Prostate gland (tissue), 2 donors: ENCODE measurements at regions of chr3 and their contacts with region 1.

Region 1: DNA sequence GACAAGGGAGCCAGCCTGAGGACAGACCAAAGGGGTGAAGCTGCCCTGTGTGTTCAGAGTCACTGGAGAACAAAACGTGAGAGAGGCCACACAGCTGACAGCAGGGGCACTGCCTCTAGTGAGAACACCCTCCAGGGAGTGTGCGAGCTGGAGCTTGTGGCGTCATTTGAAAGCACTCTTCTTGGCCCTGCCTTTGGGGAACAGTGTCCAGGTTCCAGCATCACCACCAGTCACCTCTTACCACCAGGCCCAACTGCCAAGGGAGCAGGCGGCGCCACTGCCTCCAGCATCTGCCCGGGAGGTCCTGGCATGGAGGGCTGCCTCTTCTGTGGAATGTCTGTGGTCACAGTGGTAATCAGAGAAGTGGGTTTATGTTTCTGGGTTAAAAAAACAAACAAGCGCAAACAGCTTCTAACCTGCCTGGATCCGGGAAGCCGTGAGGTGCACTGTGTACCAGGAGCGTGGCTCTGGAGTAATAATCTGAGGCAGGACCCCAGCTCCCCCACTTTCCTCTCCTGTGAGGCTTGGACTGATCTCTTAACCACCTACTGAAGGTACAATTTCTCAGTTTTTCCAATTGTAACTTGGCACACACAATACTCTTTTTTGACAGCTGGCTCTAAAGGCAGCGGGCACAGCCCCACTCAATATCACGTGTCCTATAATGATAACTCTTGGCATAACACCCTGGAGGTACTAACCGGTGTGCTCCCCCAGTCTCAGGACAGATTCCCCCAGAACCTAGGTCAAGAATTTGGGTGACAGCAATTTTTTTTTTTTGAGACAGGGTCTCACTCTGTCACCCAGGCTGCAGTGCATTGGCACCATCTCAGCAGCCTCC is 32.2 kb upstream of the CDCP1 start:
- DNase-seq: peak; percentile 56
- H3K4me3 ChIP-seq: no peak overlapping the region
- H3K27ac ChIP-seq: peak overlapping the region; percentile 28 to 51
- H3K4me1 ChIP-seq: peaks cover 8% of the 10 kb centered on the region
- H3K27me3 ChIP-seq: no peaks in the 10 kb centered on the region
- CTCF ChIP-seq: no peak
- POLR2A ChIP-seq: no peak

Region 2: DNA sequence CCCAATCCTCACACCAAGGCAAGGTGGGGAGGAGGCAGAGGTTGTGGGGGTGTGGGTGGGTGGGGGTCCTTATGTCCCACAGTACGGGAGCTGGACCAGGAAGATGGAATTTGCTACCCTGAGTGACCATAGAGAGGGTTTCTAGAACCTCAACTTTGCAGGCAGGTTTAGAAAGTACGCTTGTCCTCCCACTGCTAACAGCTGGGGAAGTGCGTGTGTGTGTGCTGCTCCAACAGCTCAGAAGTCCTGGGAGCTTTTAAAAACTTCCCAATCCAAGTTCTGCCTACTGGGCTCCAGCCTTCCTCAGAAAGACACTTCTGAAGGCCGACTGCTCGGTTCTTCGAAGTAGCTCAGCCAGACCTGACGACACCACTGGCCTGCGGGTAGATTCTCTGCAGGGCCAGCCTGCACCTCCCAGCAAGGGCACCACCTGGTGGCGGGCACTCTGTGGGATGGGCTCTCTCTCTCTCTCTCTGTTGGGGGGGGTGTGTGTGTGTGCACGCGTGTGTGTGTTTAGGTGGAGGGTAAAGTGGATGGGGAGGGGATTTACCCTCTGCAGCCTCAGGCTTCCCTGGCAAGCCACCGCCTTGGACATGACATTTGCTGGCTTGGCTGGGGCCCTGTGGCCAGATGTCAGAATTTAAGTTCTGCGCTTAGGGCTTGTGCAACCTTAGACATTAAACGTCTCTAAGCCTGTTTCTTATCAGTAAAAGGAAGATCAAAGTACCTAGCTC is 32.1 kb after region 1 on chr3:
- intact Hi-C with region 1: loop called (anchors 5 kb)
- DNase-seq: peak; percentile 83
- H3K4me3 ChIP-seq: no peak overlapping the region
- H3K27ac ChIP-seq: no peak overlapping the region
- H3K4me1 ChIP-seq: no peaks in the 10 kb centered on the region
- H3K27me3 ChIP-seq: no peaks in the 10 kb centered on the region
- CTCF ChIP-seq: peak; percentile 56 to 96 (median 92)
- POLR2A ChIP-seq: no peak

Region 3: DNA sequence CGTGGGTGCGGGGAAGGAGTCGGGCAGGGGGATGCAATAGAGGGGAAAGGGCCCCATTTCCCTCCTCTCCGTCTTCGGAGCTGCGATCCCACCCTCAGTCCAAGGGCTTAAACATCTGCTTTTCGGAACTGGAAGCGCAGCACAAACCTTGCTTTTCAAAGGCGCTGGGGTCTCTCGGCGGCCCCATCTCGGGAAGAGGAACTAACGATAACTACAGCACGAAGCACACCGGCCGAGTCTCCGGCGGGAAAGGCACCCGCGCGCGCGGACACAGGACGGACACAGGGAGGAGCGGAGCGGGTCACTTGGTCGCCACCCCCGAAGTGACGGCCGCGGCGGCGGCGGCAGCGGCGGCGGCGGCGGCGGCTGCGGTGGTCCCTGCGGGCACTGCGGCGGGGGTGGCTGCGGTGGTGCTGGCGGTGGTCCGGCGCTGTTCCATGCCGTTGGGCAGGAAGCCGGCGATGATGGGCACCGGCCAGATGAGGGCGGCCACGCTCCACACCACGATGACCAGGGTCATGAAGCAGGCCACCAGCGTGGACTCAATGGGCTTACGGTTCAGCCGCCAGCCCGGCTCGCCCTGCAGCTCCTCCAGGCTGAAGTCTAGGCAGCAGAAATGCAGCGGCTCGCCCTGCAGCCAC is 46.5 kb after region 1 on chr3:
- intact Hi-C with region 1: no loop called
- DNase-seq: peak; percentile 72
- H3K4me3 ChIP-seq: peak overlapping the region; percentile 41 to 54
- H3K27ac ChIP-seq: peak overlapping the region in 1 of 2 donors; percentile 41
- H3K4me1 ChIP-seq: no peaks in the 10 kb centered on the region
- H3K27me3 ChIP-seq: no peaks in the 10 kb centered on the region
- CTCF ChIP-seq: peak; percentile 26 to 75 (median 55)
- POLR2A ChIP-seq: no peak

Region 4: GRCh38 chr3:45330510-45331295 is 152.3 kb after region 1 on chr3:
- intact Hi-C with region 1: no loop called
- DNase-seq: no peak
- H3K4me3 ChIP-seq: no peak overlapping the region
- H3K27ac ChIP-seq: no peak overlapping the region
- H3K4me1 ChIP-seq: no peaks in the 10 kb centered on the region
- H3K27me3 ChIP-seq: no peaks in the 10 kb centered on the region
- CTCF ChIP-seq: no peak
- POLR2A ChIP-seq: no peak